Activated T-helper 2 cell treated with anti-CD3 and anti-CD28 coated beads, Interferon-gamma antibody, Interleukin-2, Interleukin-4, amounts not matched to agents 10 μg/mL and 5 μg/mL and 100 μg/mL, durations not matched to agents 14 hours and 24 hours and 36 hours (primary cell): ENCODE measurements at regions of chr19 and their contacts with region 1.

Region 1: GRCh38 chr19:51094696-51095279 is 12.1 kb upstream of the KLK14 start:
- DNase-seq: no peak
- H3K4me3 Mint-ChIP-seq: no peak overlapping the region
- H3K27ac Mint-ChIP-seq: no peak overlapping the region
- H3K4me1 Mint-ChIP-seq: peaks cover 9% of the 10 kb centered on the region
- H3K27me3 Mint-ChIP-seq: no peaks in the 10 kb centered on the region

Region 2: GRCh38 chr19:50933640-50934039 is 161.1 kb before region 1 on chr19:
- intact Hi-C with region 1: loop called (anchors 5 kb)
- DNase-seq: no peak
- H3K4me3 Mint-ChIP-seq: no peak overlapping the region
- H3K27ac Mint-ChIP-seq: no peak overlapping the region
- H3K4me1 Mint-ChIP-seq: peaks cover 3% of the 10 kb centered on the region
- H3K27me3 Mint-ChIP-seq: peaks cover 15% of the 10 kb centered on the region

Region 3: GRCh38 chr19:51131780-51132680 is 37.2 kb after region 1 on chr19:
- intact Hi-C with region 1: no loop called
- DNase-seq: no peak
- H3K4me3 Mint-ChIP-seq: peak overlapping the region; percentile 7
- H3K27ac Mint-ChIP-seq: peak overlapping the region; percentile 30
- H3K4me1 Mint-ChIP-seq: peaks cover 30% of the 10 kb centered on the region
- H3K27me3 Mint-ChIP-seq: peaks cover 9% of the 10 kb centered on the region

Region 4: DNA sequence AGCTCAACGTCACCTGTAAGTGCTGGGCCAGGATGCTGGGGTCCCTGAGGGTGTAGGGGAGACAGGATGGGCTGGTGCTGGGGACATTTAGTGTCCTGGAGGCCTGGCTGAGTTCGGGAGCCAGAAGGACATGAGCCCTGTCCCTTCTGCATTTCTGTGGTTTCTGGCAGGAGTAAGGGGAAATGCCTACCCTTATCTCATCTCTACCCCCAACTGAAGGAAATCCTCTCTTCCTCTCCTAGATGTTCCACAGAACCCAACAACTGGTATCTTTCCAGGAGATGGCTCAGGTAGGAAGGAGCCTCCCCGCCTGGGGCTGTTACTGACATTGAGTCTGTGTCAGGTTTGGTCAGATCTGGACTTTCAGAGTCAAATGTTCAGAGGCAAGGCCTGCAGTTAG is 131.3 kb after region 1 on chr19:
- intact Hi-C with region 1: no loop called
- DNase-seq: no peak
- H3K4me3 Mint-ChIP-seq: peak overlapping the region; percentile 76
- H3K27ac Mint-ChIP-seq: peak overlapping the region; percentile 51
- H3K4me1 Mint-ChIP-seq: peaks cover 54% of the 10 kb centered on the region
- H3K27me3 Mint-ChIP-seq: peaks cover 40% of the 10 kb centered on the region